IMR-90 (cell line): ENCODE measurements at regions of chr12 and their contacts with region 1.

Region 1: DNA sequence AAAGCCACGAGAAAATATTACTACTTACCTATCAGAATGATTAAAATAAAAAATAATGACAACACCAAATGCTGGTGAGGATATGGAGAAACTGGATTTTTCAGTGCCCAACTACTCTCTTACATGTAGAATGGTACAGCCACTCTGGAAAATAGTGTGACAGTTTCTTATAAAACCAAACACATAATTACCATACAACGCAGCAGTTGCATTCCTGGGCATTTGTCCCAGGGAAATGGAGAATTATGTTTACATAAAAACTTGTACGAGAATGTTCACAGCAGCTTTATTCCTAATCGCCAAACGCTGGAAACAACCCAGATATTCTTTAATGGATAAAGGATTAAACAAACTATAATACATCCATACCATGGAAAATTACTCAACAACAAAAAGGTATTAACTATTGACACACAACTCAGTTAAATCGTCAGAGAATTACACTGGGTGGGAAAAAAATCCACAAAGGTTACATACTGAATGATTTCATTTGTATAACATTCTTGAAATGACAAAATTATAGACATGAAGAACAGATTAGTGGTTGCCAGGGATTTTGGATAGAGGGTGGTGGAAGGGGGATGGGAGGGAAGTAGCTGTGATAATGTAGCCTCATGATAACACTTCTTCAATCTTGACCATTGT is 35.4 kb downstream of the TAOK3 start:
- DNase-seq: peak; percentile 81
- ATAC-seq: peak; percentile 72
- H3K4me3 ChIP-seq: no peak overlapping the region
- H3K27ac ChIP-seq: peak overlapping the region; percentile 97; the same call in 1 of the 2 replicates
- H3K4me1 ChIP-seq: peaks cover 12% of the 10 kb centered on the region
- H3K27me3 ChIP-seq: no peaks in the 10 kb centered on the region
- CTCF ChIP-seq: no peak
- POLR2A ChIP-seq: no peak
- RAD21 ChIP-seq: no peak

Region 2: GRCh38 chr12:118357257-118358007 is 20.1 kb after region 1 on chr12:
- CTCF ChIA-PET with region 1: no interaction called
- POLR2A ChIA-PET with region 1: no interaction called
- dilution Hi-C with region 1: no loop called
- in situ Hi-C with region 1: no loop called
- intact Hi-C with region 1: loop called (anchors 2 kb)
- DNase-seq: peak; percentile 65
- ATAC-seq: peak; percentile 6
- H3K4me3 ChIP-seq: no peak overlapping the region
- H3K27ac ChIP-seq: peak overlapping the region; percentile 71
- H3K4me1 ChIP-seq: peaks cover 9% of the 10 kb centered on the region
- H3K27me3 ChIP-seq: no peaks in the 10 kb centered on the region
- CTCF ChIP-seq: no peak
- POLR2A ChIP-seq: no peak
- RAD21 ChIP-seq: no peak